ENCODE measurements at regions of chr22 and their contacts with region 1.

Region 1: DNA sequence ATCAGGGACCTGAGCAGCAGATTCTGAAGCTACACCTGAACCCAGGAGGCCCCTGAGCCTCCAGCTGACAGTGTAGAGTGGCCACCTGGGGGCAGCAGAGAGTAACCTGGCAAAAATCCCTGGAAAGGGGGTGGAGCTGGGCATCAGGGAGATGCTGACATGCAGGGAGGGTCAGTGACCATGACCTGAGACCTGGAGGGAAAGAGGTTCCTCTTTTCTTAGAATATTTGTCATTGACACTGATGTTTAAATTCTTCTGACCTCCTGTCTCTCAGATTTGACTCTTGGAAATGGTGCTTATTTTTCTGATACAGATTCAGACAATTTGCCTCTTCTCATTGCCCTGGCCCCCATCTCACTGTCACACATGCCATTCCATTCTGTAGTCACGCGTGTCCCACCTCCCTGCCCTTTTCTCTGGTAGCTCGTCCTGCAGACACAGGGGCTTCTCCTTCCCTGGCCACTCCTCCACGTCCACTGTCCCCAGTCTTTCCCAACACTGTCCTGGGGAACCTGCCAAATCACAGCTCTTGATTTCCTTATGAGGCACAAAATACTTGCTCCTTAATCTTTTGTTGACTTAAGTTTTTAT is 117.2 kb upstream of the IGLL5 start:
- DNase-seq: peak; percentile 46 to 72
- ATAC-seq: peak in 2 of 3 donors; percentile 67 to 72
- H3K4me3 ChIP-seq: no peak overlapping the region
- H3K4me3 Mint-ChIP-seq: no peak overlapping the region
- H3K27ac ChIP-seq: no peak overlapping the region
- H3K27ac Mint-ChIP-seq: peak overlapping the region in 1 of 2 donors; percentile 49
- H3K4me1 ChIP-seq: peaks cover 79% of the 10 kb centered on the region
- H3K4me1 Mint-ChIP-seq: peaks cover 54 to 85% of the 10 kb centered on the region in 2 donors
- H3K27me3 ChIP-seq: no peaks in the 10 kb centered on the region
- H3K27me3 Mint-ChIP-seq: no peaks in the 10 kb centered on the region
- CTCF ChIP-seq: peak; percentile 88

Region 2: DNA sequence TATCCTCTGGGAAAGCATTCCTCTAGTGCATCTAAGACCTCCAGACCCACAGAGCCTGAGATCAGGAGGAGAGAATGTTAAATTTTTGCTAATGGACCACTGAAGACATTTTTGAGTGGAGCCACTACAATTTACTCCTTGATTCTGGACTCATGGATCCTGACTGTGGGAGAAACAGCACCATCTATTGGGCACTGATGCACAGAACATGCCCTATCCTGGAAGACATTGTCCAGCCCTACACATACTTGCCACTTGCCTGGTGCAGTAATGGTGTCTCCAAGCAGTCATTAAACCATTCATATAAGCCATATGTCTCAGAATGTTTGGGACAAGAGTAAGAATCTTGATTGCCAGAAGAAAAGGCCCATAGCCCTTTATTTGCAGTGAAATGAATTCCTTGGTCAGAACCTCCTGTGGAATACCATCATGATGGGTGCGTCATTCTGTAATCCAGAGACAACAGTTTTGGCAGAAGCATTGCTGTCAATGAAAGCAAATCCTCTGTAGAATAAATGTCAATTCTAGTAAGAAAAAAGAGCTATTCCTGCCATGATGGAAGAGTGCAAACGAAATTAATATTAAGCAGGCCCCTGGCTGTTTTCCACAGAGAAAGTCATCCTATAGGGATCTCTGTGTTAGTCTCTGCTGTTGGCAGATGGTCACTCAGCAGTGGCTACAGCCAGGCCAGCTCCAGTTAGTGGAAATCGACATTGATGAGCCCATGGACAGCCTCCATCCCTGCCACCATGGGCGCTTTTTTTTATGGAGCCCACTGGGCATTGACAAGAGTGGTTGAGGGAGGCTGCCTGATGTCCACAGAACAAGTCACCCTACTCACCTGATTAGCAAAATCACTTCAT is 82.5 kb before region 1 on chr22:
- intact Hi-C with region 1: no loop called
- DNase-seq: peak in 1 of 2 donors; percentile 57
- ATAC-seq: peak; percentile 58 to 83 (median 73)
- H3K4me3 ChIP-seq: no peak overlapping the region
- H3K4me3 Mint-ChIP-seq: no peak overlapping the region
- H3K27ac ChIP-seq: no peak overlapping the region
- H3K27ac Mint-ChIP-seq: no peak overlapping the region
- H3K4me1 ChIP-seq: peaks cover 14% of the 10 kb centered on the region
- H3K4me1 Mint-ChIP-seq: no peaks in the 10 kb centered on the region
- H3K27me3 ChIP-seq: no peaks in the 10 kb centered on the region
- H3K27me3 Mint-ChIP-seq: no peaks in the 10 kb centered on the region
- CTCF ChIP-seq: peak; percentile 69

Region 3: GRCh38 chr22:22710719-22711531 is 59.5 kb before region 1 on chr22:
- intact Hi-C with region 1: loop called (anchors 1 kb)
- DNase-seq: peak; percentile 82 to 86
- ATAC-seq: peak; percentile 57 to 82 (median 81)
- H3K4me3 ChIP-seq: no peak overlapping the region
- H3K4me3 Mint-ChIP-seq: peak overlapping the region; percentile 55
- H3K27ac ChIP-seq: no peak overlapping the region
- H3K27ac Mint-ChIP-seq: peak overlapping the region; percentile 8 to 60
- H3K4me1 ChIP-seq: peaks cover 23% of the 10 kb centered on the region
- H3K4me1 Mint-ChIP-seq: peaks cover 0 to 14% of the 10 kb centered on the region in 2 donors
- H3K27me3 ChIP-seq: no peaks in the 10 kb centered on the region
- H3K27me3 Mint-ChIP-seq: no peaks in the 10 kb centered on the region
- CTCF ChIP-seq: peak; percentile 99

Measured in natural killer cell (primary cell).